Heart right ventricle (tissue), 16 donors: ENCODE measurements at regions of chr6 and their contacts with region 1.

Region 1: DNA sequence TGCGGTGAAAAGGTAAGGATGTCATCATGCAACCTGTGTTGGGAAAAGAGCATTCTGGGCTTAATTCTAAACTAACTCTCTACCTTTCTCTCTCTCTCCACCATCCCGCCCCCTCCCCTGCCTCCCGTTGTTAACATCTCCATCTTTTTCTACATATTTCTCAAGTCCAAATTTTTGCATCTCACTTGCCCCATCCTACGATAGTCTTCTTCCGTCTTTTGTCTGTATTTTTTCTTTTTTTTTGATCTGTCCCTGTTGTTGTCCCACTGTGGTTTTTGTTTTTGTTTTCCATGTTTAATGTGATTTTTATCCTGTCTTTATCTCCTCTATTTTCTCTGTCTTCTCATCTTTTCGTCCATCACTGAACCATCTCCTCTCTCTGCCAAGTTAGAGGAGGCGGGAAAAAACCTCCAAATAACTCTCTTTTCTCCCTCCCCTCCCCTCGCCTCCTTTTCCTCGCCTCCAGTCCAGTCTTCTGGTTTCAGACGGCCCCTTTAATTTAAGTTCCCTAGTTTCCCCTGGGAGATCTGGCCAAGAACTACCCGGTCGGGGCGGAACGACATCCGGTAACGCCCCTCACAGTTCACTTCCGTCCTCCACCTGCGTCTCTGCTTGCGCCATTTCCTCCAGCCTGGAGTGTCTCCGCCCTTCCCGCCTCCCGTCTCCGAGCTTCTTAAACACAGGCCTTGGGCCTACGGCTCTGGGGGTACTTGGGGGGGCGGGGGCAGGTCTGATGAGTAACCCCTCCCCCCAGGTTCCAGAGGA is at the start of gene NFKBIL1:
- DNase-seq: peak; percentile 92 to 98
- ATAC-seq: peak; percentile 94 to 98 (median 98)
- H3K4me3 ChIP-seq: peak within 1 kb of the TSS; percentile 30 to 63 (median 56)
- H3K27ac ChIP-seq: peak within 1 kb of the TSS; percentile 69 to 95 (median 91)
- H3K4me1 ChIP-seq: peaks cover 10 to 51% (median 25%) of the 10 kb centered on the region in 9 donors
- H3K27me3 ChIP-seq: no peaks in the 10 kb centered on the region
- CTCF ChIP-seq: peak in 2 of 9 donors; percentile 3 to 7
- total RNA-seq, gene NFKBIL1: 9.7 to 15.8 (median 11.7) TPM

Region 2: GRCh38 chr6:31474871-31475286 is 72.3 kb before region 1 on chr6:
- intact Hi-C with region 1: no loop called
- DNase-seq: no peak
- ATAC-seq: peak in 1 of 8 donors; percentile 29
- H3K4me3 ChIP-seq: no peak overlapping the region
- H3K27ac ChIP-seq: no peak overlapping the region
- H3K4me1 ChIP-seq: peaks cover 0 to 26% (median 5%) of the 10 kb centered on the region in 9 donors
- H3K27me3 ChIP-seq: no peaks in the 10 kb centered on the region
- CTCF ChIP-seq: peak in 4 of 9 donors; percentile 12 to 25 (median 20)

Region 3: DNA sequence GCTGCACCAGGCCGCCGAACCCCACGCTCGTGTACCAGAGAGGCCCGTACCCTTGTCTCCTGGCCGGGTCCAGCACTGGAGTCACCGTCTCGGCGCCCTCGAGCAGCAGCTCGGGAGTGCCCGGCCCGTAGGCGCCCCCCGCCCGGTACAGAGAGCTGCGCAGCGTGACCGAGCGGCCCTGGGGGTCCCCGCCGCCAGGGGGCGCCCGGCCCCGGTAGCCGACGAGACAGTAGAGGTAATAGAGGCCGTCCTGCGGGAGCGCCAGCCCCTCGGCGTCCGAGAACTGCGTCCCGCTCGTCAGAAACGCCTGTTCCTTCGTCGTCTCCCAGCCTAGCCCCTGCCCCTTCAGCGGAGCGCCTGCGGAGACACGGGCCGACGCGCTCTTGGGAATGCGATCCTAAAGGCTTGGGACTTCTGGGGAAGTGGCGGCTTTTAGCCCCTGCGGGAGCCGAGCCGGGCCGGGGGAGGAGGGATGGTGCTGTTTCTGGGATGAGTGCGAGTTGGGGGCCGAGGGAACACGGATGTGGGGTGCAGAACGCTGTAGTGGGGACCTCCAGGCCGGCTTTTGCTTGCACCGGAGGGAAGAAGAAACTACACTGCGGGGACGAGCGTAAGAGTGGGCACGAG is 33.8 kb after region 1 on chr6:
- intact Hi-C with region 1: loop called in 6 of 10 experiments (anchors 2 to 5 kb)
- DNase-seq: peak; percentile 89 to 93
- ATAC-seq: peak; percentile 97 to 99 (median 98)
- H3K4me3 ChIP-seq: peak overlapping the region; percentile 36 to 97 (median 82)
- H3K27ac ChIP-seq: peak overlapping the region; percentile 41 to 94 (median 86)
- H3K4me1 ChIP-seq: peaks cover 0 to 82% (median 16%) of the 10 kb centered on the region in 9 donors
- H3K27me3 ChIP-seq: no peaks in the 10 kb centered on the region
- CTCF ChIP-seq: peak; percentile 96 to 100 (median 99)

Region 4: GRCh38 chr6:31597006-31597405 is 49.9 kb after region 1 on chr6:
- intact Hi-C with region 1: loop called (anchors 1 to 5 kb)
- DNase-seq: no peak
- ATAC-seq: peak in 6 of 8 donors; percentile 43 to 71 (median 60)
- H3K4me3 ChIP-seq: no peak overlapping the region
- H3K27ac ChIP-seq: no peak overlapping the region
- H3K4me1 ChIP-seq: peaks cover 0 to 10% (median 0%) of the 10 kb centered on the region in 9 donors
- H3K27me3 ChIP-seq: no peaks in the 10 kb centered on the region
- CTCF ChIP-seq: peak in 7 of 9 donors; percentile 26 to 53 (median 46)

Region 5: GRCh38 chr6:31609519-31610406 is 62.6 kb after region 1 on chr6:
- intact Hi-C with region 1: no loop called
- DNase-seq: no peak
- ATAC-seq: no peak
- H3K4me3 ChIP-seq: no peak overlapping the region
- H3K27ac ChIP-seq: no peak overlapping the region
- H3K4me1 ChIP-seq: peaks cover 0 to 7% (median 0%) of the 10 kb centered on the region in 9 donors
- H3K27me3 ChIP-seq: no peaks in the 10 kb centered on the region
- CTCF ChIP-seq: no peak

Region 6: DNA sequence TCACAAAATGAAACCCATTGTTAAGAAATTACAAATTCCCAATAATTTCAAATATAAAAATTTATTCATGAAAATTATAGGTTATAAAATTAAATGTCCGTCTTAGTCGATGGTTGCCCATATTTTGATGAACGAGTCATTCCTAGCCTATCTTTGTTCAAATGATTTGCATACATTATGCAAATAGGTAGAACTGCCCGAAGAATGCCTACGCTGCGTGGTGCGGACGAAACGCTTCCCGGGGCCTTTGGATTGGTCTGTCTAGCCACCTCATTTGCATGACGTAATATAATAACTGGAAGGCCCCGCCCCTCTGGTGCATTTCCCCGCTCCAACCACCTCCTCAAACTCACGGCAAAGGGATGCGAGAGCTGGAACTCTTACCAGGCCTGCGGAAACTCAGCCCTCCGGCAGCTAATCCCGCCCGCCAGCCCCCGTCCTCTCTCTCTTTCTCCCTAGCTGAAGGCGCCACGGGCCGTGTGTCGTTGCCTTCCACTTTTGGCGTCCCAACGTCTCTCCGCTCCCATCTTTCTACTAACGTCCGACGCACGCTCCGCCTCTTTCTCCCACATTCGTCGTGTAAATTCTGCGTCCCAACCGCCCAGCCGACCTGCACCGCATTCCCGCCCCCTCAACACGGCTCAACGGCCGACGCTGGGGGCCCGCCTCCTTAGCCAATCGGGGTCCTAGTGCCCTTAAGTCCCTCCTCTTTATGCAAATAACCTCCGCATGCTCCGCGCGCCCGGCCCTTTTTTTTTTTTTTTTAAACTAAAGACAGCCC is 72.9 kb after region 1 on chr6:
- intact Hi-C with region 1: loop called in 2 of 10 experiments (anchors 5 kb)
- DNase-seq: peak; percentile 97 to 98
- ATAC-seq: peak; percentile 93 to 97 (median 96)
- H3K4me3 ChIP-seq: peak overlapping the region; percentile 68 to 99 (median 80)
- H3K27ac ChIP-seq: peak overlapping the region; percentile 89 to 99 (median 96)
- H3K4me1 ChIP-seq: peaks cover 0 to 24% (median 21%) of the 10 kb centered on the region in 9 donors
- H3K27me3 ChIP-seq: no peaks in the 10 kb centered on the region
- CTCF ChIP-seq: no peak